ENCODE measurements at regions of chr15 and their contacts with region 1.

Region 1: DNA sequence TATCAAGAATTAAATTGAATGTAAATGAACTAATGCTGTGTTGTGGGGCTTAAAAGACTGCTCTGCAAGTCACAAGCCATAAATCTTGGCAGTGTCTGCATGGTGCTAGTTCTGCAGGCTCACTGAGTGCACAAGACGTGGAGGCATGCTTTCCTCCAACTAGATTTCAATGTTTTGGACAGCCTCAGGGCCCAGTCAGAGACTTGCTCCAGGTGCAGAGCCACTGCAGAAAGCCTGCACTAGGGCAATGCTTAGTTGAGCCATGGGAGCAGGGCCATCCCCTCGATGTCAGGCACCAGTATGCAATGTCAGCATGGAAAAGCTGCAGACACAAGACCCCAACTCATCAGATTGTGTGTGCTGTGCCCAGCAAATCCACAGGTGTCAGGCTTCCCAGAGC is 234.5 kb upstream of the CDIN1 start:
- DNase-seq: no peak
- ATAC-seq: no peak
- H3K4me3 ChIP-seq: no peak overlapping the region
- H3K27ac ChIP-seq: no peak overlapping the region
- H3K4me1 ChIP-seq: no peaks in the 10 kb centered on the region; the same call in 1 of the 2 replicates
- H3K27me3 ChIP-seq: no peaks in the 10 kb centered on the region
- CTCF ChIP-seq: no peak

Region 2: GRCh38 chr15:36458411-36458810 is 113.5 kb after region 1 on chr15:
- CTCF ChIA-PET with region 1: interaction called, 10 read pairs
- POLR2A ChIA-PET with region 1: no interaction called
- in situ Hi-C with region 1: no loop called
- intact Hi-C with region 1: no loop called
- DNase-seq: no peak
- ATAC-seq: no peak
- H3K4me3 ChIP-seq: no peak overlapping the region
- H3K27ac ChIP-seq: no peak overlapping the region
- H3K4me1 ChIP-seq: no peaks in the 10 kb centered on the region
- H3K27me3 ChIP-seq: no peaks in the 10 kb centered on the region
- CTCF ChIP-seq: no peak